ENCODE measurements at regions of chr4 and their contacts with region 1.

Region 1: GRCh38 chr4:148441986-148442831 is at the start of gene NR3C2:
- DNase-seq: peak; percentile 99
- H3K4me3 ChIP-seq: peak within 1 kb of the TSS; percentile 88 to 98 (median 94)
- H3K27ac ChIP-seq: peak within 1 kb of the TSS; percentile 63
- H3K4me1 ChIP-seq: peaks cover 23% of the 10 kb centered on the region
- H3K27me3 ChIP-seq: no peaks in the 10 kb centered on the region
- CTCF ChIP-seq: no peak
- POLR2A ChIP-seq: peak; percentile 98
- total RNA-seq, gene NR3C2: 15.9 and 16.4 TPM in 2 replicates

Region 2: GRCh38 chr4:147617173-147617840 is 824.9 kb before region 1 on chr4 and contains the start of gene TMEM184C:
- CTCF ChIA-PET with region 1: no interaction called
- POLR2A ChIA-PET with region 1: no interaction called
- dilution Hi-C with region 1: no loop called
- intact Hi-C with region 1: loop called (anchors 10 kb)
- DNase-seq: peak; percentile 96
- H3K4me3 ChIP-seq: peak within 1 kb of the TSS; percentile 30 to 93 (median 90)
- H3K27ac ChIP-seq: peak within 1 kb of the TSS; percentile 48
- H3K4me1 ChIP-seq: peaks cover 9% of the 10 kb centered on the region
- H3K27me3 ChIP-seq: peaks cover 8 to 12% of the 10 kb centered on the region in 2 experiments
- CTCF ChIP-seq: peak in 1 of 2 donors; percentile 16
- POLR2A ChIP-seq: peak; percentile 84
- total RNA-seq, gene TMEM184C: 27.1 and 29.2 TPM in 2 replicates

Region 3: GRCh38 chr4:147984065-147984777 is 458.0 kb before region 1 on chr4:
- CTCF ChIA-PET with region 1: interaction called, 3 read pairs
- POLR2A ChIA-PET with region 1: interaction called, 3 read pairs
- dilution Hi-C with region 1: no loop called
- intact Hi-C with region 1: loop called (anchors 1 kb)
- DNase-seq: peak; percentile 63
- H3K4me3 ChIP-seq: no peak overlapping the region
- H3K27ac ChIP-seq: no peak overlapping the region
- H3K4me1 ChIP-seq: no peaks in the 10 kb centered on the region
- H3K27me3 ChIP-seq: no peaks in the 10 kb centered on the region
- CTCF ChIP-seq: peak; percentile 73 to 80
- POLR2A ChIP-seq: no peak

Region 4: GRCh38 chr4:148141501-148141900 is 300.7 kb before region 1 on chr4:
- CTCF ChIA-PET with region 1: no interaction called
- POLR2A ChIA-PET with region 1: no interaction called
- dilution Hi-C with region 1: no loop called
- intact Hi-C with region 1: no loop called
- DNase-seq: no peak
- H3K4me3 ChIP-seq: no peak overlapping the region
- H3K27ac ChIP-seq: no peak overlapping the region
- H3K4me1 ChIP-seq: no peaks in the 10 kb centered on the region
- H3K27me3 ChIP-seq: no peaks in the 10 kb centered on the region
- CTCF ChIP-seq: no peak
- POLR2A ChIP-seq: no peak

Region 5: DNA sequence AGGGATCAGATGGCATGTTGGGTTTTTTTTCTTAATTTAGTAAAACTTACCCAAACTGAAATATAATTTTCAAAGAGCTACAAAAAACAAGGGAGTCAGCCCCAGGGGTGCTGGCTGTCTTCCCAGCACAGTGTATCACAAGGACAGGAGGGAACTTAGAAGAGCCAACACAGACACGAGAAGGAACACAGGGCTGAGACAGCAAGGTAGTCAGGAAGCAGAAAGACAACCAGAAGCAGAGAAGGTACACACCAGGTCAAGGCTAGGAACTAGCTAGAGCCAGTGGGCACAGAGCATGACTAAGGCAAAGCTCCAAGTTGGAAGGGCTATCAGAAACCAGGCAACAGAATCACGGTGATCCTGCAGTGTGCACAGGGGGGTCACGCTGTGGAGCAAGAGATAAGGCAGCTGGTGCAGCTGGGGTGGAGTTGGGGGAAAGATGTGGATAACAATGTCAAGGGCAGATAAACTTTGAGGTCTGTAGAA is 168.7 kb before region 1 on chr4:
- CTCF ChIA-PET with region 1: no interaction called
- POLR2A ChIA-PET with region 1: no interaction called
- dilution Hi-C with region 1: no loop called
- intact Hi-C with region 1: no loop called
- DNase-seq: peak; percentile 43
- H3K4me3 ChIP-seq: no peak overlapping the region
- H3K27ac ChIP-seq: no peak overlapping the region
- H3K4me1 ChIP-seq: peaks cover 14% of the 10 kb centered on the region
- H3K27me3 ChIP-seq: no peaks in the 10 kb centered on the region
- CTCF ChIP-seq: no peak
- POLR2A ChIP-seq: no peak

Region 6: DNA sequence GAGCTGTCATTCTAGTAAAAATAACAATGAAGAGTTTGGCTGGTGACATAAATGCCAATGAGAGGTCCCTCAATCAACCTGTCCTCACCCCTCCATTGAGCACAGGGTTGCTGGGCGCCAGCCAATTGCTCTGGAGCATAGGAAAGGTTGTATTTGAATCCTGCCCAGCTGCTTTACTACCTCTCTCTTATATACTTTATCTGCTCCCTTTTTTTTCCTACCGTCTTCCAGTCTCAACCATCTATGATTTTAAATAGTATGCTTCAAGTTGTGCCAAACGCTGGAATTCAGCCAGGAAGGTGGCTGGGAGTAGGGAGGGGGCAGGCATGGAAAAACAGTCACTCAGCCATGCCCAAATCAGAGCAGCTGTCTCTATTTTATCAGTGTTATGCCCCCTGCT is 153.8 kb before region 1 on chr4:
- CTCF ChIA-PET with region 1: interaction called, 9 read pairs
- POLR2A ChIA-PET with region 1: no interaction called
- dilution Hi-C with region 1: no loop called
- intact Hi-C with region 1: loop called (anchors 5 kb)
- DNase-seq: peak; percentile 27
- H3K4me3 ChIP-seq: no peak overlapping the region
- H3K27ac ChIP-seq: no peak overlapping the region
- H3K4me1 ChIP-seq: no peaks in the 10 kb centered on the region
- H3K27me3 ChIP-seq: no peaks in the 10 kb centered on the region
- CTCF ChIP-seq: no peak
- POLR2A ChIP-seq: no peak

Region 7: DNA sequence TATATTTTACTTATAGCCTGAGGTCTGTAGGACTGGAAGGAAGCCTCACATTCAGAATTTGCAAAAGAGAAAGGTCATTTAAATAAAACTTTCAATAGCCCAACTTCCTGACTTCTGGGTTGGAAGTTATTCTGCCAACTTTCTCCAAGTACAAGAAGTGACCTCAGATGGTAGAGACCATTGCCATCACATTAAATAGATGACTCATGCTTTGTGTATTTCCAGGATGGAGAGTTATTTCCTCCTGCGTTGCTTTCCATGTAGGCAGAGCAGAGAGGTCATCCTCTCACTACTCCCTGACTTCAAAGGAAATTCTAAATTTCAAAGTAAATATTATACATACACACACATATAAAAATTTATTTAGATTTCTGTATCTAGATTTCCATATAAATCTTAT is 73.0 kb after region 1 on chr4:
- CTCF ChIA-PET with region 1: no interaction called
- POLR2A ChIA-PET with region 1: no interaction called
- dilution Hi-C with region 1: no loop called
- intact Hi-C with region 1: loop called (anchors 1 kb)
- DNase-seq: peak; percentile 94
- H3K4me3 ChIP-seq: peak overlapping the region in 1 of 3 experiments; percentile 18
- H3K27ac ChIP-seq: peak overlapping the region; percentile 93
- H3K4me1 ChIP-seq: peaks cover 31% of the 10 kb centered on the region
- H3K27me3 ChIP-seq: no peaks in the 10 kb centered on the region
- CTCF ChIP-seq: no peak
- POLR2A ChIP-seq: peak; percentile 69

Region 8: GRCh38 chr4:148716431-148717052 is 274.3 kb after region 1 on chr4:
- CTCF ChIA-PET with region 1: no interaction called
- POLR2A ChIA-PET with region 1: interaction called, 4 read pairs
- dilution Hi-C with region 1: no loop called
- intact Hi-C with region 1: loop called (anchors 5 kb)
- DNase-seq: peak; percentile 56
- H3K4me3 ChIP-seq: no peak overlapping the region
- H3K27ac ChIP-seq: no peak overlapping the region
- H3K4me1 ChIP-seq: peaks cover 3% of the 10 kb centered on the region
- H3K27me3 ChIP-seq: no peaks in the 10 kb centered on the region
- CTCF ChIP-seq: no peak
- POLR2A ChIP-seq: no peak

Region 9: DNA sequence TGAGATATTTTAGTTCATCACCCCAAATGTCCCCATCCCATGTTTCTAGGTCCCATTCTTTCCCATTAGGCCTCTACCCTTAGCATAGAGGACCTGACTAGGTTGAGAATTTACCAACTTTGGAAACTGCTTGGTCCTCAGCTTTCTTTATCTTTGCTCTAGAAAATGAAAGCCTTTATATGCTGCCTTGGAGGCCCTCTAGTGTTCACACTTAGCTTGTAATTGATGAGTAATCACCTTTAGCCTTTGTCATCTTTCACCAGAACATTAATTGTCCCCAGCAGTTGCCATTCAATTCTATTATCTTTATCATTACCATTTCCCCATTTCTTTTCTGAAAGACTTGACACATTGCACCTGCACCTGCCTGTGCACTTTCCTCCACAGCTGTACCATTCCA is 589.2 kb after region 1 on chr4:
- CTCF ChIA-PET with region 1: interaction called, 41 read pairs
- POLR2A ChIA-PET with region 1: interaction called, 5 read pairs
- dilution Hi-C with region 1: no loop called
- intact Hi-C with region 1: loop called (anchors 2 kb)
- DNase-seq: peak; percentile 50
- H3K4me3 ChIP-seq: no peak overlapping the region
- H3K27ac ChIP-seq: no peak overlapping the region
- H3K4me1 ChIP-seq: no peaks in the 10 kb centered on the region
- H3K27me3 ChIP-seq: no peaks in the 10 kb centered on the region
- CTCF ChIP-seq: peak; percentile 28 to 53
- POLR2A ChIP-seq: no peak